Activated CD8-positive, alpha-beta T cell treated with anti-CD3 and anti-CD28 coated beads, Interleukin-2, amount 10 ng/mL, durations not matched to agents 7 days and 5 days (primary cell): ENCODE measurements at regions of chr3 and their contacts with region 1.

Region 1: DNA sequence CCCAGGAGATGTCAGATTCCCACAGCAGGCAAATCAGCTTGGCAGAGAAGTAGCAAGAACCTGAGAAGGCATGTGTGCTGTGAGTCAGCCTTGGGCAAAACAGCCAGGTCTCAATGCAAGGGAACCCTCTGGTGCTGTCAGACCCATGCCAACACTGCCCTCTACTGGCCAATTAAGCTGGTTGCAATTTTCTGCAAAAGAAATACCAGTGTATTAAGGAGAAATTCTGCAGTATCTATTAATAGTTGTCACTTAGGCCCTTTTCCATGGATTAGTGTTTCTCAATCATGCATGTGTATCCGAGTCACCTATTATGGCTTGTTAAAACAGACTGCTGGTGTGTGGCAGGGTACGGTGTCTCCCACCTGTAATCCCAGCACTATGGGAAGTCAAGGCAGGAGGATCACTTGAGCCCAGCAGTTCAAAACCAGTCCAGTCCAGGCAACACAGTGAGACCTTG is 26.2 kb downstream of the MAP4 start:
- DNase-seq: peak; percentile 84
- ATAC-seq: peak; percentile 93
- H3K4me3 Mint-ChIP-seq: no peak overlapping the region
- H3K27ac Mint-ChIP-seq: no peak overlapping the region
- H3K4me1 Mint-ChIP-seq: peaks cover 5% of the 10 kb centered on the region
- H3K27me3 Mint-ChIP-seq: no peaks in the 10 kb centered on the region

Region 2: GRCh38 chr3:47824541-47825473 is 165.2 kb before region 1 on chr3:
- CTCF ChIA-PET with region 1: interaction called, 41 read pairs
- POLR2A ChIA-PET with region 1: interaction called, 3 read pairs
- DNase-seq: peak; percentile 80
- ATAC-seq: peak; percentile 100
- H3K4me3 Mint-ChIP-seq: peak overlapping the region; percentile 89
- H3K27ac Mint-ChIP-seq: peak overlapping the region; percentile 81
- H3K4me1 Mint-ChIP-seq: peaks cover 34% of the 10 kb centered on the region
- H3K27me3 Mint-ChIP-seq: no peaks in the 10 kb centered on the region

Region 3: DNA sequence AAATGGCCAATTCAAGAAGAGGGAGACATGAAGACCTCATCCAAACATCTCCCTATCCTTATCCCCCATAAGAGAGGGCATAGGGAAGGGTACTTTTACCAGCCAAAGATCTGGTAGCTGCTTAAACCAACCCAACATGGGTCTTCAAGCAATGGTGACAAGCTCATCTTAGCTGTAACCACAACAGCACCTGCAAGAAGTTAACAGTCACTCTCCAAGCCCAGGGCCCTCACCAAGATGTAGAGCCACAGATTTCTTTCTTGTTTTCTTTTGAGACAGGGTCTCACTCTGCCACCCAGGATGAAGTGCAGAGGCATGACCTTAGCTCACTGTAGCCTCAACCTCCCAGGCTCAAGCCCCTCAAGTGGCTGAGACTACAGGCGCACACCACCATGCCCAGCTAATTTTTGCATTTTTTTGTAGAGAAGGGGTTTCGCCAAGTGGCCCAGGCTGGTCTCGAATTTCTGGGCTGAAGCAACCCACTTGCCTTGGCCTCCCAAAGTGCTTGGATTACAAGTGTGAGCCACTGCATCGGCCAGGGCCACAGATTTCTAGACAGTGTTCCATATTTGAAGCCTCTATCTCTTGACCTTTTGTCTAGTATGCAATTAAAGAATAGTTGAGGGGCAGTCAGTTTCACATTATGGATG is 129.9 kb before region 1 on chr3:
- CTCF ChIA-PET with region 1: interaction called, 10 read pairs
- POLR2A ChIA-PET with region 1: no interaction called
- DNase-seq: no peak
- ATAC-seq: no peak
- H3K4me3 Mint-ChIP-seq: no peak overlapping the region
- H3K27ac Mint-ChIP-seq: no peak overlapping the region
- H3K4me1 Mint-ChIP-seq: no peaks in the 10 kb centered on the region
- H3K27me3 Mint-ChIP-seq: no peaks in the 10 kb centered on the region

Region 4: DNA sequence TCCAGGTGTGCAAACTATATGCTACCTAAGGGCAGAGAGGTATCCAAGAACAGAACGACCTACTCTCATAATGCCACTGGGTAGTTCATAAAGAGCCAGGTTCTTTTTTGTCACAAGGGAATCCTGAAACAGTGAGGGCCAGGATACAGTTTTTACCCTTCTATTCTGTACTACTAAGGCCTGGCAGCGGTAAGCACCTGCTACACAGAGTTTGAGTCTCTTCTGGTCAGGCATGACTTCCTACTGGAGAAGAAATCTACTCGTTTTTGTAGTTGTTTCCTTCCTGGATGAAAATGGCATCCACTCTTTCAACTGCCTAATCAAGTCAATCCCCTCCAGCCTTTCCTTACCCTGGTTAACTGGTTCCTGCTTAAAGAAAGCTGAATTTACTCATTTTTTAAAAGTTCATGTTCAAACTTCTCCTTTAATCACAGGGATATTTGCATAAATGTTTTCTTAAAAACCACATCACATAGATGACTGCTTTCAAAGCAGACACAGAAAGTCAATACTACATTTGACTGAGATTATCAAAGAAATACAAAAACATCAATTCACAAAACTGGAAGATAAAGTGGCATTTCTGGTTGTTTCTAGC is 13.8 kb before region 1 on chr3:
- CTCF ChIA-PET with region 1: interaction called, 18 read pairs
- POLR2A ChIA-PET with region 1: no interaction called
- DNase-seq: no peak
- ATAC-seq: no peak
- H3K4me3 Mint-ChIP-seq: no peak overlapping the region
- H3K27ac Mint-ChIP-seq: no peak overlapping the region
- H3K4me1 Mint-ChIP-seq: no peaks in the 10 kb centered on the region
- H3K27me3 Mint-ChIP-seq: no peaks in the 10 kb centered on the region

Region 5: GRCh38 chr3:48151058-48151806 is 161.2 kb after region 1 on chr3:
- CTCF ChIA-PET with region 1: interaction called, 19 read pairs
- POLR2A ChIA-PET with region 1: no interaction called
- DNase-seq: peak; percentile 81
- ATAC-seq: peak; percentile 98
- H3K4me3 Mint-ChIP-seq: no peak overlapping the region
- H3K27ac Mint-ChIP-seq: no peak overlapping the region
- H3K4me1 Mint-ChIP-seq: peaks cover 2% of the 10 kb centered on the region
- H3K27me3 Mint-ChIP-seq: no peaks in the 10 kb centered on the region